Activated CD4-positive, alpha-beta T cell treated with anti-CD3 and anti-CD28 coated beads, Interleukin-2, amount 10 ng/mL, durations not matched to agents 24 days and 14 days (primary cell): ENCODE measurements at regions of chr16 and their contacts with region 1.

Region 1: DNA sequence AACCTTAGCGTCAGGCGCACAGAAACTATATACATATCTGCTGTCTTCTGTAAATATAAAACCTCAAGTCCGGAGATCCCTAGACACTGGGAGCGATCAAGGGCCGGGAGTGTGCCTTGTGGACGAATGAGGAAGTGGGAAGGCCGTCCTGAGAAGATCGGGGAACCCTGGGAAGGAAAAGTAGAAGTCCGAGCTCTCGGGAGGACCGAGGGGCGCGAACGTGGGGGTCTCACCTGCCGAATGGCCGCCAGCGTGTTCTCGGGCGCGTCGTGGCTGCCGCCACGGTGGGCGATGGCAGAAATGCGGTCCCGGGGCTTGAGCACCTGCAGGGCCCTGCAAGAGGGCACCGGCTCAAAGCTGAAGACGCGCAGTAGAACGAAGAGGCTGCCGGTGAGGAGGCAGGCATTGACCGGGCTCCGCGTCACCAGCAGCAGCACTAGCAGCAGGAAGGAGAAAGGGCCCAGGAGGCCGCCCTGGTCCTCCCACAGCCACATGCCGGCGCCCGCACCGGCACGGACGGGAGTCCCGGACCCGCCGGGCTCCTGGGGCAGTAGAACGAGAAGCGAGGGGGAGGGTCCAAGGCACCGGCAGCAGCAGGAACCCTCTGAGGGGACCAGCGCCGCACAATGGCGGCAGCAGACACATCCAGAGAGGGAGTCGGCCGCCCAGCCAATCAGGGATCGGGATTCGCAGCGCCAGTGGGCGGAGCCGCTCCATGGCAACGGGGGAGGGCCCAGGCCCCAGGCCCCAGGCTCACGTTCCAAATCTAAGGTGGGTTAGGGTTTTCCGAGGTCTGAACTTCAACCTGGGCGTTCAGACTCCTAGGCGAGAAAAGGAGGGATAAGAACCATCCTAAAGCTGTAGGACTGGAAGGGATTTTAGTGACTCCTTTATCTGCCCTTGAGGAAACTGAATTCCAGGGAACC is at the start of gene GDE1:
- DNase-seq: peak; percentile 98
- H3K4me3 Mint-ChIP-seq: peak within 1 kb of the TSS; percentile 93
- H3K27ac Mint-ChIP-seq: peak within 1 kb of the TSS; percentile 91
- H3K4me1 Mint-ChIP-seq: peaks cover 55% of the 10 kb centered on the region
- H3K27me3 Mint-ChIP-seq: no peaks in the 10 kb centered on the region
- total RNA-seq, gene GDE1: 25.2 and 28.7 TPM in 2 replicates

Region 2: DNA sequence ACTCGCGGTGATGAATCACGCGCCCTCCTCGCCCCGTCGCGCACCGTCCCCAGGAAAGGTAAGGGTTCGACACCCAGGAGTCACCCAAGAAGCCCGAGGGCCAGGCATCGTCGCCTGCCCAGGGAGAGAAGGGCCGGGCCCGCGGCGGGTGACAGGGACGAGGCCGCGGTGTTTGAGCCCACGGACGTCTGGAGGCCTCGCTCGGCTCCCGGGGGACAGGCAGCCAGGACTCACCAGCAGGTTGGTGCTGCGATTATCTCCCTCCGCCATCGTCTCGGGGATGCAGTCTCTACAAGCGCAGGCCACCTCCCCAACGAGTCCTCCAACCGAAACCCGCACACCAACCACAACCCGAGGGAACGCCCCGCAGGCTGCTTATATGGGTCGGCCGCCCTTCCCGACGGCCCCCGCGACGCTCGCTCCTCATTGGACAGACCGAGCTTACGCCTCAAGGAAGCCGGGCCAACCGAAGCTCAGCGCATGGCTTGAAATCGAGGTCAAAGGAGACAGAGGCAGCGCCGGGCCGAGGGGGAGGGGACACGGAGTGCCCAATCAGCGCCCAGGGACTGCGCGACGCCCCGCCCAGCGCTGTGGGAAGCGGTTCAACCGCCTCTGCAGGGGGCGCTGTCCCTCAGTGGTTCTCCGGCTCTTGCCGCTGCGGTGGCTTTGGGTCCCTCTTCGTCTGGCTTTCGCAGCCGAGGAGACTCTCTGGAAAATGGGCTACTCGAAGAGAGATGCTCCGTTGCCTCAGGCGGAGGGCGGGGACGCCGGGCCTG is 720.3 kb before region 1 on chr16 and contains the start of gene ARL6IP1:
- intact Hi-C with region 1: loop called (anchors 5 kb)
- DNase-seq: peak; percentile 99
- H3K4me3 Mint-ChIP-seq: peak within 1 kb of the TSS; percentile 99
- H3K27ac Mint-ChIP-seq: peak within 1 kb of the TSS; percentile 97
- H3K4me1 Mint-ChIP-seq: peaks cover 59% of the 10 kb centered on the region
- H3K27me3 Mint-ChIP-seq: no peaks in the 10 kb centered on the region
- total RNA-seq, gene ARL6IP1: 97.2 and 98.5 TPM in 2 replicates

Region 3: DNA sequence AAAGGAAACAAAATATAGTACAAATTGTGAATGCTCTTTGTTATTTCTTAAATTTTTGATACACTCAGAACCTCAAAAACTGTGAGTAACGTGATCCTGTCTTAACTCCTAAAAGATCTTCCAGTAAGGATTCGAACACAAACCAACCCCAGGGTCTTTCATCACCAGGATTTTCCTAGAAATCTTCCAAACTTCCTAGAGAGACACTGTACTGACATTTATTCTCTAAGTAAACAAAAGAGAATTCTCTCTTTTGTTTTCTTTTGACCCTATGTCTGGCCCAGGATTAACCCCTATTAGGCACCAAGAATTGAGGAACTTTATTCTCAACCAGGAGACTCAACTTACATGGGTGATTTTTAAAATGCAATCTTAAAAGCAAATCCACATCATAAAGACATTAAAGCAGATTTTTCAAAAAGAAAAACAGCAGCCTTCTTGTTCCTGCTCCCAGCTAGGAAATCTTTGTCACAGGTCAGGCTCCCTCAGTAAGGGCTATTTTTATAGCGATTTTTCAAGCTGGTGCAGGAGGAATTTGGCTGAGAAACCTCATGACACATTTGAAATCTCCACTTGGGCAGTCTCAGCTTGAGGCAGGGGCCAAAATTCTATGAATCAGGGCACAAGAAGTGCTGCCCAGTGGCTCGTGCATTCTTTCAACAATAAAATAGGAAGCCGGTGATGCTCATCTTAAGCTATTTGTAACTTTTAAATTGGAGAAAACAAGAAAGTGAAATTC is 589.3 kb before region 1 on chr16:
- intact Hi-C with region 1: loop called (anchors 2 kb)
- DNase-seq: no peak
- H3K4me3 Mint-ChIP-seq: no peak overlapping the region
- H3K27ac Mint-ChIP-seq: no peak overlapping the region
- H3K4me1 Mint-ChIP-seq: peaks cover 10% of the 10 kb centered on the region
- H3K27me3 Mint-ChIP-seq: no peaks in the 10 kb centered on the region

Region 4: DNA sequence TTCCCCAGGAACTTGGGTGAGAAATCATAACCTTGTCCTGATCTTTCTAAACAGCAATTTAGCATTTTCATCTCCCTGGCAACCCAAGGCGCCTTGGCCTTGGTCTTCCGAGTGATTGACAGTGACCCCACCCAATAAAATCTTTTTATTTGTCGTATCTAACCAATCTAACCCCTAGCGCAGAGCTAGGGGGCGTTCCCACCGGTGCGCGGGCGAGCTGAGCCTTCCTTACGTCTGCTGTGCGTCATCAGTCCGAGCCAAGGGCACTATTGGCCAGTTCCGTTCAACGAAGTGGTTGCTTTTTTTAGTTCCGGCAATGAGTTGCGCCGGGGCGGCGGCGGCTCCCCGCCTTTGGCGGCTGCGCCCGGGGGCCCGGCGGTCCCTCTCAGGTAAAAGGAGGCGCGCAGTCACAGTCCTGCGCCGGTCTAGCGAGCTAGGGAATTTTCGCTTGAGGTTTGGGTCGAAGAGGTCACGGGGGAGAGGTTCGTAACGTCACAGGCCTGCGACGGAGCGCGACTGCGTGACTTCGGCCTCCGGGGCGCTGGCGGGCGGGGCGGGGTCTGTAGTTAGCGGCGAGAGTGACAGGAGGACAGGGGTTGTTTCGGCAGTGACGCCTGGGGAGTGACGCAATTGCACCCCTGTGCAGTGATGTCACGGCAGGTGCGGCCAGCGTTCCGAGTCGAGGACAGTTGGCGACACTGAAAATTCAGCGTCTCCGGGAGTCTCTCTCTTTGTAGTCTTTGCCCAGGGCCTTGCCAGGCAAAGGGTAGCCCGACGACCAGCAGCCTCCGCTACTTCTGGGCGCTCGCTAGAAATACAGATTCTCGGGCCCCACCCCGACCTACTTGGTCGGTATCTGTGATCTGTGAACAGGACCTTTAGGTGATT is 454.1 kb before region 1 on chr16 and contains the start of gene COQ7:
- intact Hi-C with region 1: loop called (anchors 1 kb)
- DNase-seq: peak; percentile 99
- H3K4me3 Mint-ChIP-seq: peak within 1 kb of the TSS; percentile 92
- H3K27ac Mint-ChIP-seq: peak within 1 kb of the TSS; percentile 97
- H3K4me1 Mint-ChIP-seq: peaks cover 16% of the 10 kb centered on the region
- H3K27me3 Mint-ChIP-seq: peaks cover 3% of the 10 kb centered on the region
- total RNA-seq, gene COQ7: 21.6 and 22.0 TPM in 2 replicates

Region 5: DNA sequence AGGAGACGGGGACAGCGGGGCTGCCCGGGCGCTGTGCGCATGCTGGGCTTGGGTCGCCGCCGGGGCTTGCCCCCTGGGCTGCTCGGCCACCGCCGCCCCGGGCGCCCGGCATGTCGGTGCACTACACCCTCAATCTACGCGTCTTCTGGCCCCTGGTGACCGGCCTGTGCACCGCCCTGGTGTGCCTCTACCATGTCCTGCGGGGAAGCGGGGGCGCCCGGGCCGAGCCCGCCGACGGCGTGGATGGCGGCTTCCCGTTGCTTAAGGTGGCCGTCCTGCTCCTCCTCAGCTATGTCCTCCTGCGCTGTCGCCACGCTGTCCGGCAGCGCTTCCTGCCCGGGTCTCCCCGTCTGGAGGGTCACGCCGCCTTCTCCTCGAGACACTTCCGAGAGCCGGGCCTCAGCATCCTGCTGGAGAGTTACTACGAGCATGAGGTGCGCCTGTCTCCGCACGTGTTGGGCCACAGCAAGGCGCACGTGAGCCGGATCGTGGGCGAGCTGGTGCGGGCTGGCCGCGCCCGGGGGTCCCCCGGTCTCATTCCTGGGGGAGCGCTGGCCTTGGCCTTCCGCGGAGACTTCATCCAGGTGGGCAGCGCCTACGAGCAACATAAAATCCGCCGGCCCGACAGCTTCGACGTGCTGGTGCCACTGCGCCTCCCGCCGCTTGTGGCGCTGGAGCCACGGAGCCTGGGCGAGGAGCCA is 407.2 kb before region 1 on chr16:
- intact Hi-C with region 1: loop called (anchors 1 kb)
- DNase-seq: peak; percentile 73
- H3K4me3 Mint-ChIP-seq: peak overlapping the region; percentile 87
- H3K27ac Mint-ChIP-seq: peak overlapping the region; percentile 87
- H3K4me1 Mint-ChIP-seq: peaks cover 35% of the 10 kb centered on the region
- H3K27me3 Mint-ChIP-seq: peaks cover 9% of the 10 kb centered on the region

Region 6: GRCh38 chr16:19507867-19508266 is 13.9 kb before region 1 on chr16:
- intact Hi-C with region 1: no loop called
- DNase-seq: no peak
- H3K4me3 Mint-ChIP-seq: no peak overlapping the region
- H3K27ac Mint-ChIP-seq: no peak overlapping the region
- H3K4me1 Mint-ChIP-seq: peaks cover 4% of the 10 kb centered on the region
- H3K27me3 Mint-ChIP-seq: no peaks in the 10 kb centered on the region

Region 7: GRCh38 chr16:19555162-19555937 is 33.6 kb after region 1 on chr16 and contains the start of gene VPS35L:
- intact Hi-C with region 1: loop called (anchors 1 kb)
- DNase-seq: peak; percentile 99
- H3K4me3 Mint-ChIP-seq: peak within 1 kb of the TSS; percentile 97
- H3K27ac Mint-ChIP-seq: peak within 1 kb of the TSS; percentile 95
- H3K4me1 Mint-ChIP-seq: peaks cover 12% of the 10 kb centered on the region
- H3K27me3 Mint-ChIP-seq: no peaks in the 10 kb centered on the region
- total RNA-seq, gene VPS35L: 37.8 and 41.9 TPM in 2 replicates

Region 8: DNA sequence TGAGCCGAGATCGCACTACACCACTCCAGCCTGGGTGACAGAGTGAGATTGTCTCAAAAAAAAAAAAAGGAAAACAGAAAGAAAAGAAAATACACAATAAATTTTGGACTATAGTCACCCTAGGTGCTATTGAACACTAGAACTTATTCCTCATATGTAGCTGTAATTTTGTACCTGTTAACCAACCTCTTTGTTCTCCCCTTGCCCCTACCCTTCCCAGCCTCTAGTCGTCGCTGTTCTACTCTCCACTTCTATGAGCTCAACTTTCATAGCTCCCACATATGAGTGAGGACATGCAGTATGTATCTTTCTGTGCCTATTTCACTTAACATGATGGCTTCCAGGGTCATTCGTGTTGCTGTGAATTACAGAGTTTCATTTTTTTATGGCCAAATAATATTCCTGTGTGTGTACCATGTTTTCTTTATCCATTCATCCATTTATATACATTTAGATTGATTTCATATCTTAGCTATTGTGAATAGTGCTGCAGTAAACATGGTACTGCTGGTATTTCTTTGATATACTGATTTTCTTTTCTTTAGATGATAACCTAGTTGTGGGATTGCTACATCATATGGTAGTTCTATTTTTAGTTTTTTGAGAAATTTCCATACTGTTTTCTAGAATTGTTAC is 62.0 kb after region 1 on chr16:
- intact Hi-C with region 1: no loop called
- DNase-seq: peak; percentile 74
- H3K4me3 Mint-ChIP-seq: no peak overlapping the region
- H3K27ac Mint-ChIP-seq: no peak overlapping the region
- H3K4me1 Mint-ChIP-seq: no peaks in the 10 kb centered on the region
- H3K27me3 Mint-ChIP-seq: no peaks in the 10 kb centered on the region

Region 9: DNA sequence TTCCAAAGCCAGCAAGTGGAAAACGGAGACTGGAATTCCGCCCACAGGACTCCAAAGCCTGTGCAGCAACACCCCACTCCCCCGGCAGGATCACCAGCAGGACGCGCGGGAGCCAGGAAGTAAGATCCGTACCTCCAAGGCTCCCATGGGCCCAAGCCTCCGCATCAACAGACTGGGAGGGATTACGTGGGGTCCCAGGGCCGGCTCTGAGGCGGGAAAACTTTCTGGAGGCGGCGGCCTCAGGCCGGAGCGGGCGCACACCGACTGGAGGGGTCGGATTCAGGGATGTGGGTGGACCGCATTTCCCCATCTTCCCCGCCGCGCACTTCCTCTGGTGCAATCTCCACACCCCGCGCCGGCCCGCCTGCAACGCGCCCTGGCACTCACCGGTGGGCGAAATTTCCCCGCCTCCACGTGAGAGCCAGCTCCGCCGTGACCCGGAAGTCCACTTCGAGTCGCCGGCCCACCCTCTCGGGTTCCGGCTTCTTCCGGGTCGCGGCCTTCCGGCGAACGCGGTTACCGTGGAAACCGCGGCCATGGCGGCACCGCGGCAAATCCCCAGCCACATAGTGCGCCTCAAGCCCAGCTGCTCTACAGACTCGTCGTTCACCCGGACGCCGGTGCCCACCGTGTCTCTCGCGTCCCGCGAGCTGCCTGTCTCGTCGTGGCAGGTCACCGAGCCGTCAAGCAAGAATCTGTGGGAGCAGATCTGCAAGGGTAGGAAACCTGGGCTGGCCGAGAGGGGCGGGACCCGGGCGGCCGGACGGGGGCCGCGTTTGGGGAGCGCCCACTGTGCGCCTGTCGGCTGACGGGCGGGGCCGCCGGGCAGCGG is 196.3 kb after region 1 on chr16 and contains the starts of genes IQCK and KNOP1:
- intact Hi-C with region 1: loop called (anchors 1 kb)
- DNase-seq: peak; percentile 97
- H3K4me3 Mint-ChIP-seq: peak within 1 kb of the TSS; percentile 96
- H3K27ac Mint-ChIP-seq: peak within 1 kb of the TSS; percentile 89
- H3K4me1 Mint-ChIP-seq: peaks cover 18% of the 10 kb centered on the region
- H3K27me3 Mint-ChIP-seq: no peaks in the 10 kb centered on the region
- total RNA-seq, gene IQCK: 1.0 and 2.0 TPM in 2 replicates
- total RNA-seq, gene KNOP1: 36.9 and 37.0 TPM in 2 replicates